A549 (cell line): ENCODE measurements at regions of chr3 and their contacts with region 1.

Region 1: DNA sequence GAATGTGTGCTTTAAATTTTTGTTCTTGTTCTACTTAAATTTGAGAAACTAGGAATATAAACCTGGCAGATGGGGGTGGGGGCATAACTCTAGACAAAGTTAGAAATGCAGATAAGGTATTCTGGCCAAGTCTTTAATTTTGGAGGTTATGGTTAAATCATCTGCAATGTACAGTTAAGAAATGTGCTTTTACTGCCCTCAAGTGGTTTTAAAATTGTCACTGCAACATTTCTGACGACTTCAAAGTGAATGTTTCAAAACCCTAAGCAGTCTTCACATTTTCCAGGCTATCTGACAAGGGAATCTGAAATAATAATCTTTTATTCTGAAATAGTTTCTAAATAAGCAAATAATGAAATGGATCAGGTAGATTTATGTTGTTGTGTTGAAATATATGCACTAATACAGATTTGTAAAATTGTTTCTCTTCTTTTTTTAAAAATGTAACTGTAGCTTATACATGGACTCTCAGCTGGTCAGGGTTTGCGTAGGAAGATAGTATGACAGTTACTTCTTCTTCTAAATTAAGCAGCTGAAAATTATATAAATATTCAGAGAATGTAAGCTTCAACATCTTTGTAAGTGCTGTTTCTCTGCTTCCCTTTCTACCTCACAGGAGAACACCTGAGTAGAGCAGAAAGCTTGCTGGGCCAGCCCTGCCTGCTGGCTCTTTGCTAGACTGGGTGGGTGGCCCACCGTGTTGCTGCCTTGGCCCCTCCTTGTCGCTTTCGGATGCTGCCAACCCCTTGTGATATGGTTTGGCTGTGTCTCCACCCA is 45.0 kb downstream of the SUCNR1 start:
- DNase-seq: peak; percentile 34 to 75
- ATAC-seq: peak; percentile 77 to 86
- H3K4me3 ChIP-seq: no peak overlapping the region
- H3K27ac ChIP-seq: peak overlapping the region; percentile 50 to 70; a peak in 5 of 6 replicates
- H3K4me1 ChIP-seq: peaks cover 11% of the 10 kb centered on the region; the same call in 2 of the 3 replicates
- CTCF ChIP-seq: peak; percentile 88
- EP300 ChIP-seq: no peak
- POLR2A ChIP-seq: no peak
- RAD21 ChIP-seq: peak; percentile 82 to 95

Region 2: GRCh38 chr3:151838583-151839312 is 79.7 kb before region 1 on chr3:
- CTCF ChIA-PET with region 1: interaction called, 10 read pairs
- POLR2A ChIA-PET with region 1: no interaction called
- DNase-seq: peak; percentile 27 to 89
- ATAC-seq: peak; percentile 61 to 82; a peak in 4 of 6 replicates
- H3K4me3 ChIP-seq: no peak overlapping the region
- H3K27ac ChIP-seq: peak overlapping the region; percentile 82 to 88
- H3K4me1 ChIP-seq: peaks cover 52% of the 10 kb centered on the region
- CTCF ChIP-seq: peak; percentile 82
- EP300 ChIP-seq: no peak
- POLR2A ChIP-seq: no peak
- RAD21 ChIP-seq: peak; percentile 94